AG04449 (cell line): ENCODE measurements at regions of chr9 and their contacts with region 1.

Region 1: DNA sequence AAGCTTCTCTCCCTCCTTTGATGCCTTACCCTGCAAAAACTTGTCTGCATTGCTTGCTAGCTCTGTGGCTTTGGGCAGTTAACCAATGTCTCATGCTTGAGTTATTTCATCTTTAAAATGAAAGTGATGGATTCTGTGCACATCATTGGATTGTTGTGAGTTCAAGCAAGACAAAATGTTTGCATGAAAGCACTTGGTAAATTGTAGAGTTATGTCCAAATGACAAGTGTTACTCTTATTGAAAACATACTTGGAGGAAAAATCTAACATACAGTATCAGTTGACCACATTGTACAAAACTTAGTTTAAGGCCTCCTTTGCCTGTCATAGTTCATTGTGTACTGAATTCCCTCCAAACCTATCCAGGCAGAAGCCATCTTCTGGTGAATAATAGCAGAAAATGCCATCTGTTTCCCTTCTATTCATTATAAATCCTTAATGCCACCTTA is 30.0 kb downstream of the TGFBR1 start:
- DNase-seq: peak; percentile 34
- H3K4me3 ChIP-seq: no peak overlapping the region
- CTCF ChIP-seq: no peak

Region 2: GRCh38 chr9:98860871-98861293 is 274.0 kb before region 1 on chr9:
- CTCF ChIA-PET with region 1: interaction called, 58 read pairs
- POLR2A ChIA-PET with region 1: no interaction called
- DNase-seq: peak; percentile 73
- H3K4me3 ChIP-seq: no peak overlapping the region
- CTCF ChIP-seq: peak; percentile 66

Region 3: GRCh38 chr9:99150451-99151171 is 15.7 kb after region 1 on chr9:
- CTCF ChIA-PET with region 1: interaction called, 15 read pairs
- POLR2A ChIA-PET with region 1: no interaction called
- DNase-seq: no peak
- H3K4me3 ChIP-seq: no peak overlapping the region
- CTCF ChIP-seq: no peak

Region 4: GRCh38 chr9:99299211-99300102 is 164.5 kb after region 1 on chr9:
- CTCF ChIA-PET with region 1: no interaction called
- POLR2A ChIA-PET with region 1: no interaction called
- DNase-seq: peak; percentile 24
- H3K4me3 ChIP-seq: no peak overlapping the region
- CTCF ChIP-seq: no peak

Region 5: DNA sequence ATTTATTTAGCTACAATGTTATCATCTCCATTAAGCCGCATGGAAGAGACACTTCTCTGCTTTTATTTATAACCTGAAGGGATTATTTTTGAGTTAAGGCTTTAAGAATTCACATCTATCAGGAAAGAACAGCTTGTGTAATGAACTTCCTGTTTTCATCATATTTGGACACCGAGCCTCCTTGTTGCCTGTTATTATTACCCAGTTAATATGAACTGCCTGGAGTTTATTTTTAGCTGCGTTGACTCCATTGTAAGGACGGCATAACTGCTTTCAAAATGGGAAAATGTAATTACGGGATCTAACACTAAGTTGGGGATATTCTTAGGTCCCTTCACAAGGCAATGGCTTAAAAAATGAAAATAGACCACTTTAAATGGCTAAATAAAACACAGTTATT is 597.8 kb after region 1 on chr9:
- CTCF ChIA-PET with region 1: no interaction called
- POLR2A ChIA-PET with region 1: no interaction called
- DNase-seq: no peak
- H3K4me3 ChIP-seq: no peak overlapping the region
- CTCF ChIP-seq: no peak